Esophagus squamous epithelium (tissue), 5 donors: ENCODE measurements at regions of chr20 and their contacts with region 1.

Region 1: DNA sequence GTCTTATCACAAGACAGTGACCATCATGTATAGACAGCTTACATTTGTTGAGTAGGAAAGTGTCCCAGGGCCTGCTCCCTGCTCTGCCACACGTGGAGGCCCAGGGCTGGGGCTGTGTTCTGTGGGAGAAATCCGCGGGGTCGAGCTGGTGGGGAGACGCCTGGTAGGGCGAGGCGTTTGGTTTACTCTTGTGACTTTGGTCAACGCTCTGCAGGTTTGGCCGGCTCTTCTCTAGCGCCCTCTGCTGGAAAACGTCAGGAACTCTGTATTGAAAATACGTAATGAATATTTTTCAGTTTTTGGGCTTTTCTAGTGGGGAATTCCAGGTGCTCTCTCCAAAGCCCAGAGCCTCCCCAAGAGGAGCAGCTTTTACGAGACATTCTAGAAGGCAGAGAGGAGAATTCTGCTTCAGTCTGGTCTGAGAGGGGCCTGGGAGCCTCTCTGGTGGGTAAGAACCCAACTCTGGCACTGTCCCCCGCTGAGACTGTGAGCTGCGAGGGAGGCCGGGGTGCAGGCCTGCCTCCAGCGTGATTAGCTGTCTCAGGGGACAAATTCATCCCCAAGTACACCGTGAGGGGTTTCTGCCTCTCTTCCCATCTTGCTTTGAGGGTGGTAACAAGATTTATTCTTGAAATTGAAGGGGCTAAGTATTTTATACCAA is 112.6 kb upstream of the RALGAPA2 start:
- DNase-seq: no peak
- H3K4me3 ChIP-seq: peak overlapping the region in 1 of 4 donors; percentile 34
- H3K27ac ChIP-seq: no peak overlapping the region
- H3K4me1 ChIP-seq: peaks cover 0 to 8% (median 0%) of the 10 kb centered on the region in 3 donors
- H3K27me3 ChIP-seq: peaks cover 0 to 62% (median 0%) of the 10 kb centered on the region in 4 donors
- CTCF ChIP-seq: peak; percentile 60 to 86 (median 74)
- POLR2A ChIP-seq: no peak

Region 2: DNA sequence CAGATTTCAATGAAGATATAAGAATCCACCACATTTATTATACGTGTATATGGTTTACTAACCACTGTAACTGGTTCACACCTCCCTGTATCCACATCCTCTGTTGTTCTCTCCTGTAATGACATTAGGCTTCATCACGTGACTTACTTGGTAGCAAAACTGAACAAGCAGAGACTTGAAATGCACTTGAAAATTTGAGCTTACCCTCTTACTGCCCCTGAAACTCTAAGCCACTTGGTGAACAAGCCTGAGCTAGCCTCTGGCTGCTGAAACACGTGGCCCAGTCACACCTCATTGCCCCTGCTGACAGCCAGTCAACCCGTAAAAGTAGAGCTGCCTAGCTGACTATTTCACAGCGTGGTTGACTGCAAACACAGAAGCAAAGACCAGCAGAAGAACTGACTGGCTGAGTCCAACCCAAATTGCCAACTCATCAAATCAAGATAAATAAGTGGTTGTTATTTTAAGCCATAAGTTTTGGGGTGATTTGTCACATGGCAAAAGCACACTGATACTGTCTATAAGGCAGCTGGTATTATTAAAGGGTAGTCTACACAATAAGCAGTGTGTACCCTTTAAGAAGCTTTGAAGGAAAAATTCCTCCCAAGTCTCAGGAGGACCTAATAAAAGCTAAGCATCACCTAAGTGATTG is 221.6 kb before region 1 on chr20:
- intact Hi-C with region 1: loop called (anchors 10 kb)
- DNase-seq: no peak
- H3K4me3 ChIP-seq: no peak overlapping the region
- H3K27ac ChIP-seq: peak overlapping the region; percentile 36 to 73 (median 50)
- H3K4me1 ChIP-seq: peaks cover 0 to 18% (median 4%) of the 10 kb centered on the region in 3 donors
- H3K27me3 ChIP-seq: no peaks in the 10 kb centered on the region
- CTCF ChIP-seq: no peak
- POLR2A ChIP-seq: no peak

Region 3: GRCh38 chr20:20664795-20665589 is 160.1 kb before region 1 on chr20:
- intact Hi-C with region 1: loop called (anchors 10 kb)
- DNase-seq: no peak
- H3K4me3 ChIP-seq: no peak overlapping the region
- H3K27ac ChIP-seq: no peak overlapping the region
- H3K4me1 ChIP-seq: peaks cover 0 to 6% (median 0%) of the 10 kb centered on the region in 3 donors
- H3K27me3 ChIP-seq: no peaks in the 10 kb centered on the region
- CTCF ChIP-seq: peak in 5 of 6 experiments; percentile 33 to 55 (median 42)
- POLR2A ChIP-seq: no peak